Endothelial cell of umbilical vein (primary cell): ENCODE measurements at regions of chr7 and their contacts with region 1.

Region 1: DNA sequence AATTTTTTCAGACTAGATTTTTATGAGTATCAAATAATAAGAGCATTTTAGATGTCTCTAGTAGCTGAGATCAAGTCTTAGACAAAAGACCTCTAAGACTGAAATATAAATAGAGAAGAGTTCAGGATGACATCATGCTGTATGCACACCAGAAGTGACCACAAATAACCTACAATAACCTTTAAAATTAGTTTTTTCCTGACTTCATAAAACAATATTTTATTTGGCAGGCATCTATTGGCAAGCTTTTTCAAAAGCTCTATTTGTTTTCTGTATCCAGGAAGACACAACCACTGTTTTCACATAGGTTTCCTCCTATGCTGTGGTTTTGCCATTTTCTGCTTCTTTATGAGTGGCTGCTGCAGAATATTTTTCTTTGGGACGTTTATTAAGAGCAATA is 359.1 kb downstream of the CRPPA start:
- DNase-seq: peak; percentile 95
- H3K4me3 ChIP-seq: no peak overlapping the region
- H3K27ac ChIP-seq: peak overlapping the region; percentile 88
- H3K4me1 ChIP-seq: peaks cover 34% of the 10 kb centered on the region
- H3K27me3 ChIP-seq: no peaks in the 10 kb centered on the region
- CTCF ChIP-seq: no peak
- POLR2A ChIP-seq: no peak

Region 2: GRCh38 chr7:14748461-14748860 is 1313.8 kb before region 1 on chr7:
- CTCF ChIA-PET with region 1: no interaction called
- POLR2A ChIA-PET with region 1: interaction called, 3 read pairs
- dilution Hi-C with region 1: no loop called
- intact Hi-C with region 1: loop called (anchors 2 kb)
- DNase-seq: peak; percentile 95
- H3K4me3 ChIP-seq: no peak overlapping the region
- H3K27ac ChIP-seq: peak overlapping the region; percentile 60
- H3K4me1 ChIP-seq: peaks cover 28% of the 10 kb centered on the region
- H3K27me3 ChIP-seq: no peaks in the 10 kb centered on the region
- CTCF ChIP-seq: no peak
- POLR2A ChIP-seq: peak; percentile 34

Region 3: GRCh38 chr7:15709978-15710377 is 352.3 kb before region 1 on chr7:
- CTCF ChIA-PET with region 1: no interaction called
- POLR2A ChIA-PET with region 1: no interaction called
- dilution Hi-C with region 1: no loop called
- intact Hi-C with region 1: loop called (anchors 1 kb)
- DNase-seq: peak; percentile 60
- H3K4me3 ChIP-seq: no peak overlapping the region
- H3K27ac ChIP-seq: peak overlapping the region; percentile 57
- H3K4me1 ChIP-seq: peaks cover 40% of the 10 kb centered on the region
- H3K27me3 ChIP-seq: no peaks in the 10 kb centered on the region
- CTCF ChIP-seq: no peak
- POLR2A ChIP-seq: no peak

Region 4: DNA sequence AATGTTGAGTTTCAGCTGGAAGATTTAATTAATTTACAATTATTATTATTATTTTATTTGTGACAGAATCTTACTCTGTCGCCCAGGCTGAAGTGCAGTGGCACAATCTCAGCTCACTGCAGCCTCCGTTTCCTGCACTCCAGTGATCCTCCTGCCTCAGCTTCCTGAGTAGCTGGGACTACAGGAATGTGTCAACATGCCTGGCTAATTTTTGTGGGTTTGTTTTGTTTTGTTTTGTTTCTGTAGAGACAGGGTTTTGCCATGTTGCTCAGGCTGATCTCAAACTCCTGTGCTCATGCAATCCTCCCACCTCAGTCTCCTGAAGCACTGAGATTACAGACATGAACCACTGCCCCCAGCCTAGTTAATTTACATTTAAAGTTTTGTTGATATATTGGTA is 282.0 kb before region 1 on chr7:
- CTCF ChIA-PET with region 1: no interaction called
- POLR2A ChIA-PET with region 1: no interaction called
- dilution Hi-C with region 1: no loop called
- intact Hi-C with region 1: loop called (anchors 1 kb)
- DNase-seq: peak; percentile 86
- H3K4me3 ChIP-seq: no peak overlapping the region
- H3K27ac ChIP-seq: no peak overlapping the region
- H3K4me1 ChIP-seq: no peaks in the 10 kb centered on the region
- H3K27me3 ChIP-seq: no peaks in the 10 kb centered on the region
- CTCF ChIP-seq: no peak
- POLR2A ChIP-seq: no peak

Region 5: GRCh38 chr7:15972862-15973275 is 89.4 kb before region 1 on chr7:
- CTCF ChIA-PET with region 1: interaction called, 3 read pairs
- POLR2A ChIA-PET with region 1: interaction called, 3 read pairs
- dilution Hi-C with region 1: no loop called
- intact Hi-C with region 1: loop called (anchors 1 kb)
- DNase-seq: peak; percentile 87
- H3K4me3 ChIP-seq: no peak overlapping the region
- H3K27ac ChIP-seq: no peak overlapping the region
- H3K4me1 ChIP-seq: peaks cover 23% of the 10 kb centered on the region
- H3K27me3 ChIP-seq: no peaks in the 10 kb centered on the region
- CTCF ChIP-seq: no peak
- POLR2A ChIP-seq: no peak

Region 6: GRCh38 chr7:16098585-16099179 is 36.4 kb after region 1 on chr7:
- CTCF ChIA-PET with region 1: interaction called, 13 read pairs
- POLR2A ChIA-PET with region 1: no interaction called
- dilution Hi-C with region 1: no loop called
- intact Hi-C with region 1: loop called (anchors 1 kb)
- DNase-seq: peak; percentile 85
- H3K4me3 ChIP-seq: no peak overlapping the region
- H3K27ac ChIP-seq: peak overlapping the region; percentile 86
- H3K4me1 ChIP-seq: peaks cover 22% of the 10 kb centered on the region
- H3K27me3 ChIP-seq: no peaks in the 10 kb centered on the region
- CTCF ChIP-seq: peak; percentile 64 to 70
- POLR2A ChIP-seq: no peak

Region 7: GRCh38 chr7:16346375-16347018 is 284.2 kb after region 1 on chr7:
- CTCF ChIA-PET with region 1: no interaction called
- POLR2A ChIA-PET with region 1: no interaction called
- dilution Hi-C with region 1: no loop called
- intact Hi-C with region 1: no loop called
- DNase-seq: no peak
- H3K4me3 ChIP-seq: no peak overlapping the region
- H3K27ac ChIP-seq: no peak overlapping the region
- H3K4me1 ChIP-seq: no peaks in the 10 kb centered on the region
- H3K27me3 ChIP-seq: no peaks in the 10 kb centered on the region
- CTCF ChIP-seq: no peak
- POLR2A ChIP-seq: no peak